Ovary (tissue), 10 donors: ENCODE measurements at regions of chr1 and their contacts with region 1.

Region 1: DNA sequence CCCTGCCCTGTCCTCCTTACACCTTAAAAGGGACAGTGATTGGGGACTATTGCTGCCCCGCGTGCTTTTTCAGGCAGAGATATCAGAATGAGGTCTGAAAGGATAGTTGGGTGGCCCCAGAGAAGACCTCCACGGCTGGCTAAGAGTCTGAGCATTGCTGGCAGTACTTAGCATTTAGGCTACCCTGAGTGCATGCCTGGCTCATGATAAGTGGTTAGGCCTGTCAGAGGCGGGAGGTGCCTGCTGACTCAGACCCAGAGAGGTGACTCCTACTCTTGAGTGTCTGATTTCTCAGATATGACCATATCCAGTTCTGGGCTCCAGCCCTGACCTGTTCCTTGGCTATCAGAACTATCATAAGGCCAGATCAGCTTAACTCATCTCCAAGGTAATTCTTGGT is 213.7 kb downstream of the PBX1 start:
- DNase-seq: peak in 1 of 5 donors; percentile 49
- H3K4me3 ChIP-seq: no peak overlapping the region
- H3K27ac ChIP-seq: peak overlapping the region; percentile 16 to 68
- H3K4me1 ChIP-seq: peaks cover 46% of the 10 kb centered on the region
- H3K27me3 ChIP-seq: no peaks in the 10 kb centered on the region
- CTCF ChIP-seq: no peak
- EP300 ChIP-seq: no peak
- POLR2A ChIP-seq: no peak

Region 2: GRCh38 chr1:164637461-164638375 is 134.9 kb before region 1 on chr1:
- intact Hi-C with region 1: loop called in 1 of 4 experiments (anchors 10 kb)
- DNase-seq: no peak
- H3K4me3 ChIP-seq: no peak overlapping the region
- H3K27ac ChIP-seq: no peak overlapping the region
- H3K4me1 ChIP-seq: peaks cover 22% of the 10 kb centered on the region
- H3K27me3 ChIP-seq: no peaks in the 10 kb centered on the region
- CTCF ChIP-seq: no peak
- EP300 ChIP-seq: no peak
- POLR2A ChIP-seq: no peak